Activated B cell treated with CpG ODN at 0.5 μM for 24 hours (primary cell): ENCODE measurements at regions of chr1 and their contacts with region 1.

Region 1: GRCh38 chr1:28703629-28704028 is 33.1 kb upstream of the YTHDF2 start:
- DNase-seq: no peak
- ATAC-seq: no peak
- H3K4me3 Mint-ChIP-seq: no peak overlapping the region
- H3K27ac Mint-ChIP-seq: no peak overlapping the region
- H3K4me1 Mint-ChIP-seq: no peaks in the 10 kb centered on the region
- H3K27me3 Mint-ChIP-seq: no peaks in the 10 kb centered on the region
- CTCF ChIP-seq: no peak

Region 2: GRCh38 chr1:28631713-28632112 is 71.9 kb before region 1 on chr1:
- CTCF ChIA-PET with region 1: no interaction called
- POLR2A ChIA-PET with region 1: interaction called, 16 read pairs
- intact Hi-C with region 1: no loop called
- DNase-seq: no peak
- ATAC-seq: no peak
- H3K4me3 Mint-ChIP-seq: no peak overlapping the region
- H3K27ac Mint-ChIP-seq: no peak overlapping the region
- H3K4me1 Mint-ChIP-seq: peaks cover 5% of the 10 kb centered on the region
- H3K27me3 Mint-ChIP-seq: no peaks in the 10 kb centered on the region
- CTCF ChIP-seq: no peak

Region 3: DNA sequence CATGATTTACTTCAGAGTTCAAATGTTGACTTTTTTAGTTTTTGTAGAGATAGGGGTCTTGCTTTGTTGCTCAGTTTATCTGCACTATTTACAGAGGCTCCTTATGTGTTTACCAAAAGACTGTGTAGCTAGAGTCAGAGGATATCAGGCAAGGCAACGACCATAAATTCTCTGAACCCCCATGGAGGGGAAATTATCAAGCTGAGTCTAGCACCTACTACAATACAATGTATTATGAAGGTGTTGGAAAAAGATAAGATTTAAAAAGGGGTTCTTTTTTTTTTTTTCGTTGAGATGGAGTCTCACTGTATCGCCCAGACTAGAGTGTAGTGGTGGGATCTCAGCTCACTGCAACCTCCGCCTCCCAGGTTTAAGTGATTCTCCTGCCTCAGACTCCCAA is 18.7 kb before region 1 on chr1:
- CTCF ChIA-PET with region 1: no interaction called
- POLR2A ChIA-PET with region 1: interaction called, 12 read pairs
- intact Hi-C with region 1: no loop called
- DNase-seq: no peak
- ATAC-seq: no peak
- H3K4me3 Mint-ChIP-seq: no peak overlapping the region
- H3K27ac Mint-ChIP-seq: peak overlapping the region; percentile 18
- H3K4me1 Mint-ChIP-seq: peaks cover 2% of the 10 kb centered on the region
- H3K27me3 Mint-ChIP-seq: no peaks in the 10 kb centered on the region
- CTCF ChIP-seq: no peak